MCF 10A (cell line): ENCODE measurements at regions of chr17 and their contacts with region 1.

Region 1: GRCh38 chr17:41786227-41787020 is at the start of gene JUP:
- DNase-seq: peak; percentile 100
- H3K4me3 Mint-ChIP-seq: peak within 1 kb of the TSS; percentile 74
- H3K27ac Mint-ChIP-seq: peak within 1 kb of the TSS; percentile 70
- H3K4me1 Mint-ChIP-seq: peaks cover 33% of the 10 kb centered on the region
- H3K27me3 Mint-ChIP-seq: no peaks in the 10 kb centered on the region
- CTCF ChIP-seq: peak; percentile 77
- total RNA-seq, gene JUP: 112 and 131 TPM in 2 replicates

Region 2: DNA sequence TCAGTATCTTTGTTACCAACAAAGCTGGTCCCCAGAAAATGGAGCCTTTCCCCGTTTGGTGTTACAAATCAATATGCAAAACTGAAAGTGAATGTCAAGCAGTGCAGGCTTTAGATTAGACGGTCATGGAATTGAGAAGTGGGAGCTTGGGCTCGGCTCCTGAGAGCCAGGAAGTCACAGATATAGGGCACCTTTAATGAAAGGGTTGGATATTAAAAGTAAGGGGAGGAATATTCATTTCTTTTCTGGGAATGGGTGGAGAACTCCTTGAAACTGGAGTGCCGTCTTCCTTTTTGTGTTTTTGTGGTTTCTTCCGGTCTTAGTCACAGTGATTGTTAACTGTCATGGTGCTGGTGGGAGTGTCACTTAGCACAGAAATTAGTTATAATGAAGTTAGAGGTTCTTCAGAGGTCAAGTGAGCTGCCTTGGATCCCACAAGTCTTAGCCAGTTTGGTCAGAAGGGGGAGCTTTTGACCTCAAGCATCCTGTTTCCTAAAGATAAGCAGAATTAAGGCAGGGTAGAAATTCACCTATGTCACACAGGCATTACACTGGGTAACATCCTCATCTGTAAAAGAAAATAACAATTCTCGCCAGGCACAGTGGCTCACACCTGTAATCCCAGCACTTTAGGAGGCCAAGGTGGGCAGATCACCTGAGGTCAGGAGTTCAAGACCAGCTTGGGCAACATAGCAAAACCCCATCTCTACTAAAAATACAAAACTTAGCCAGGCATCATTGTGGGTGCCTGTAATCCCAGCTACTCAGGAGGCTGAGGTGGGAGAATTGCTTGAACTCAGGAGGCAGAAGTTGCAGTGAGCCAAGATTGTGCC is 107.3 kb before region 1 on chr17:
- CTCF ChIA-PET with region 1: no interaction called
- POLR2A ChIA-PET with region 1: no interaction called
- intact Hi-C with region 1: no loop called
- DNase-seq: peak; percentile 91
- H3K4me3 Mint-ChIP-seq: peak overlapping the region; percentile 77
- H3K27ac Mint-ChIP-seq: peak overlapping the region; percentile 91
- H3K4me1 Mint-ChIP-seq: peaks cover 14% of the 10 kb centered on the region
- H3K27me3 Mint-ChIP-seq: no peaks in the 10 kb centered on the region
- CTCF ChIP-seq: peak; percentile 18

Region 3: GRCh38 chr17:41738077-41738735 is 48.2 kb before region 1 on chr17:
- CTCF ChIA-PET with region 1: interaction called, 10 read pairs
- POLR2A ChIA-PET with region 1: interaction called, 17 read pairs
- intact Hi-C with region 1: no loop called
- DNase-seq: peak; percentile 82
- H3K4me3 Mint-ChIP-seq: no peak overlapping the region
- H3K27ac Mint-ChIP-seq: peak overlapping the region; percentile 42
- H3K4me1 Mint-ChIP-seq: peaks cover 16% of the 10 kb centered on the region
- H3K27me3 Mint-ChIP-seq: peaks cover 40% of the 10 kb centered on the region
- CTCF ChIP-seq: peak; percentile 95

Region 4: DNA sequence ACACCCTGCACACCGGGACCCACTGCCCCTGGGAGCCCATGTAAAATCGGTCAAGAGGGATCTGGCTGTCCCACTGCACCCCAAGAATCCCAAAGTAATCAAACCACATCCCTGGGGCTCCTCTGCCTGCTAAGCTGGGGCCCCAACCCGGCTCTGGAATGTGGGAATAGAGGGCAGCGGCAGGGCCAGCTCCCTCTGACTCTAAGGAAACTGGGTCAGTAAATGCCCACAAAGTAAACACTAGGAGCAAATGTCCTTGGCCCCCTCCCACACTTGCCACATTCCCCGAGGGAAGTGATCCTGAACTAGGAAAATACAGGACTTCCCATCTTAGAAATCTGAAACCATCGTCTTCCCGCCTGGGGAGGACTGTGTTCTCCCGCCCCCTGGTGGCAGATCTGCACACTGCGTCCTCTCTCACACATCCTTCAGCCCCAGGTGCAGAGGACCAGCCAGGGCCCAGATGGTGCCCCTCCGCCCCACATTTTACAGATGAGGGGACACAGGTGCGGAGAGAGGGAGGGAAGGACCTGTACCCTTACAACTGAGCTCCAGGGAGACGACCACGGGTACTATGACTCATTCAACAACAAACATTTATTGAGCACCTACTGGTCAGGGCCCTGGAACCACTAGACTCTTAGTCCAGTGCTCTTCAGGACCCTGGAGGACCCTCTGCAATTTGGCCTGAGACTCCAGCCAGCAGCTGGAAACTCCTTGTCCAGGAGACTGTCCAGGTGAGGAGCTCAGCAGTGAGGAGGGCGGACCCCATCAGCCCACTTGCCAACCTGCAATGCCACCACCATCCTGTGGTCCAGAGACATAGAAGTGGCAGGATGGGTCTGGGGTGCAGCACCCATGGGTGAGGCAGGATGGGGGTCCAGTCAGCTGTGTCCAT is 15.2 kb after region 1 on chr17:
- CTCF ChIA-PET with region 1: interaction called, 73 read pairs
- POLR2A ChIA-PET with region 1: interaction called, 599 read pairs
- intact Hi-C with region 1: loop called (anchors 1 kb)
- DNase-seq: peak; percentile 91
- H3K4me3 Mint-ChIP-seq: peak overlapping the region; percentile 56
- H3K27ac Mint-ChIP-seq: peak overlapping the region; percentile 89
- H3K4me1 Mint-ChIP-seq: peaks cover 22% of the 10 kb centered on the region
- H3K27me3 Mint-ChIP-seq: no peaks in the 10 kb centered on the region
- CTCF ChIP-seq: peak; percentile 95

Region 5: DNA sequence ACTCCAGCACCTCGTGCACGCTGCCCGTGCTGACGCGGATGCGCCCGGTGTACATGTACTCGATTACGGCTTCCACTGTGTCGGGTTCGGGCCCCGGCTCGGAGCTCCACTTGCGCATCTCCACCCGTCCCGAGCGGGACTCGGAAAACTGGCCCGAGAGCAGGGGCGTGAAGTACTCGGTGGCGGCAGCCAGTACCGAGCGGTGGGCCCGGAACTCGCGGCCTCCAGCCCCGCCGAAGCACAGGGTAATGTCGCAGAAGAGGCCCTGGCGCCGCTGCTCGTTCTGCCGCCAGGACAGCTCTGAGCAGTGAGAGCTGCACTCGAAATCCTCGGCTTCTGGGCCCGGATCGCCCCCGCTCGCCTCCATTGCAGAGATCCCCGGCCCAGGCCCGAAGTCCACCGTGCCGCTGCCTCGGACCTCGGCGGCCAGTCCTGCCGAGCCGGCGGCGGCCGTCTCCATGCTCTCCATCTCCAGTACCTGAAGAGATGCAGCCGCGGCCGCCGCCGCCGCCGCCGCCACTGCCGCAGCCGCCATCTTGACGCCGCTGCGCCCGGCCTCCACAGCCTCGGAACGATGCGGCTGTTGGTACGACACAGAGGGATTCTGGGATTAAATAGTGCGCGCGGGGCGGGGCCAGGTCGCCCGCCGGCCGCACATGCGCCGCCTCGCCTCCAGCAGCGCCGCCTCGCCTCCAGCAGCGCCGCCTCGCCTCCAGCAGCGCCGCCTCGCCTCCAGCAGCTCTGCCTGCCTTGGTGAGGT is 78.6 kb after region 1 on chr17 and contains the start of gene KLHL11:
- CTCF ChIA-PET with region 1: interaction called, 4 read pairs
- POLR2A ChIA-PET with region 1: interaction called, 26 read pairs
- intact Hi-C with region 1: no loop called
- DNase-seq: peak; percentile 89
- H3K4me3 Mint-ChIP-seq: no peak within 1 kb of the TSS
- H3K27ac Mint-ChIP-seq: no peak within 1 kb of the TSS
- H3K4me1 Mint-ChIP-seq: peaks cover 7% of the 10 kb centered on the region
- H3K27me3 Mint-ChIP-seq: no peaks in the 10 kb centered on the region
- CTCF ChIP-seq: no peak
- total RNA-seq, gene KLHL11: 19.1 and 22.3 TPM in 2 replicates